ENCODE measurements at regions of chr17 and their contacts with region 1.

Region 1: GRCh38 chr17:45828628-45829027 is 16.1 kb upstream of the SPPL2C start:
- DNase-seq: peak; percentile 74
- H3K4me3 ChIP-seq: no peak overlapping the region; a peak in 1 of 4 replicates
- H3K27ac ChIP-seq: peak overlapping the region in 1 of 2 experiments; percentile 94; a peak in 2 of 4 replicates
- H3K4me1 ChIP-seq: peaks cover 0 to 62% of the 10 kb centered on the region in 2 experiments; a peak in 3 of 4 replicates
- H3K27me3 ChIP-seq: no peaks in the 10 kb centered on the region
- CTCF ChIP-seq: no peak
- EP300 ChIP-seq: no peak
- RAD21 ChIP-seq: peak; percentile 15; the same call in 1 of the 2 replicates

Region 2: GRCh38 chr17:45656527-45657181 is 172.0 kb before region 1 on chr17:
- CTCF ChIA-PET with region 1: interaction called, 38 read pairs
- POLR2A ChIA-PET with region 1: no interaction called
- DNase-seq: no peak
- H3K4me3 ChIP-seq: no peak overlapping the region
- H3K27ac ChIP-seq: no peak overlapping the region
- H3K4me1 ChIP-seq: no peaks in the 10 kb centered on the region
- H3K27me3 ChIP-seq: no peaks in the 10 kb centered on the region; the same call in 1 of the 2 replicates
- CTCF ChIP-seq: no peak
- EP300 ChIP-seq: no peak
- RAD21 ChIP-seq: no peak

Region 3: GRCh38 chr17:45719335-45720071 is 109.1 kb before region 1 on chr17:
- CTCF ChIA-PET with region 1: interaction called, 68 read pairs
- POLR2A ChIA-PET with region 1: interaction called, 3 read pairs
- DNase-seq: no peak
- H3K4me3 ChIP-seq: no peak overlapping the region
- H3K27ac ChIP-seq: no peak overlapping the region
- H3K4me1 ChIP-seq: no peaks in the 10 kb centered on the region
- H3K27me3 ChIP-seq: no peaks in the 10 kb centered on the region; the same call in 1 of the 2 replicates
- CTCF ChIP-seq: peak; percentile 54
- EP300 ChIP-seq: no peak
- RAD21 ChIP-seq: no peak

Region 4: GRCh38 chr17:45756266-45756991 is 72.2 kb before region 1 on chr17:
- CTCF ChIA-PET with region 1: interaction called, 10 read pairs
- POLR2A ChIA-PET with region 1: no interaction called
- DNase-seq: no peak
- H3K4me3 ChIP-seq: no peak overlapping the region
- H3K27ac ChIP-seq: no peak overlapping the region
- H3K4me1 ChIP-seq: peaks cover 0 to 11% of the 10 kb centered on the region in 2 experiments; a peak in 1 of 4 replicates
- H3K27me3 ChIP-seq: no peaks in the 10 kb centered on the region; the same call in 1 of the 2 replicates
- CTCF ChIP-seq: no peak
- EP300 ChIP-seq: no peak
- RAD21 ChIP-seq: no peak

Region 5: DNA sequence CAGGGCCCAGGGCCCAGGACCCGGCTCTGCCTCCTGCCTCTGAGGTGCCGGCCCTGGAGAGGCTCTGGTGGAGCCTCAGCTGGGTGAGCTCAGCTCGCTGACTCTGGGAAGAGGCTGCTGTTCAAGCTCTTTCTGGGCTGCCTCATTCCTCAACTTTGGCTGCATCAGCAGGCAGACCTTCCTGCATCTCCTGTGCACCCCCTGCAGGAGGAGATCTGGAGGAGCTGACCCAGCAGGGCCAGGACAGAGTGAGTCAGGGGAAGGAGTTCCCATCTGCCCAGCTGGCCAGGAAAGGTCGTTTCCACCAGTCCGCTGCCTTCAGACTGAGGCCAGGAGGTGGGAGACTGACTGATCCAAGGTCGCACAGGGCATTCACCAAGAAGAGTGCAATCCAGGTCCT is 33.8 kb before region 1 on chr17:
- CTCF ChIA-PET with region 1: interaction called, 34 read pairs
- POLR2A ChIA-PET with region 1: interaction called, 4 read pairs
- DNase-seq: no peak
- H3K4me3 ChIP-seq: no peak overlapping the region
- H3K27ac ChIP-seq: no peak overlapping the region
- H3K4me1 ChIP-seq: no peaks in the 10 kb centered on the region; a peak in 1 of 4 replicates
- H3K27me3 ChIP-seq: peaks cover 32% of the 10 kb centered on the region; the same call in 1 of the 2 replicates
- CTCF ChIP-seq: peak; percentile 14; the same call in 1 of the 2 replicates
- EP300 ChIP-seq: no peak
- RAD21 ChIP-seq: peak; percentile 34

Region 6: DNA sequence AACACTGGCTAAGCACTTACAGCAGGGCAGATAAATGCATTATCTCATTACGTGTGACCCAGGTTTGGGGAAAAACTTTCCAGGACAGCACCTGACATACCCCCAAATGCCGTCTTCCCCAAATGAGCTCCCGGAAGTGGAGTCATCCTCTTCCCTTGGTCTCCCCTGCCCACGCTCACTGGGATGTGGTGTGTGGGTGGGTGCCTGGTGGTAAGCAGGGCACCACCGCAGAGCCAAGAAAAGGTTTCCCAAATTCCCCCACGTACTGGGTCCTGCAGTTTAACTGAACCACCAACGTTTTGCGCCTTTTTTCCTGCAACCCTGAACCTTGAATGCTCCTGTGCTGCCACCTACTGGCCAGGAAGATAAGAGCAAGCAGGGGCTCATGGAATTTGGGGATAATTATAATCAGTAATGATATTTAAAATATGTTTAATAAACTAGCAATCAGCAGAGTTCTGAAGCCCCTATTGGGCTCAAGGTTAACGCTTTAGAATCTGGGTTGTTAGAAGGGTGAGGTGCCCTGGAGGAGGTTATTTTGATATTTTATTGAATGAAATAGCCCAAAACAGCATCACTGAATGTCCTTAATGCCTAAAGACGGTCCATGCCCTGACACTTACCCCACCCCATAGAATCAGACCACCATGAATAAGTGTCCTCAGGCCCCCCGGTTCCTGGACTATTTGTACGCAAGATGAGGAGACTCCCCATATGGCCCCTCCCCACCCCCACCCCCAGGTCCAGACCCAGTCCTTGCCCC is 24.1 kb after region 1 on chr17:
- CTCF ChIA-PET with region 1: interaction called, 327 read pairs
- POLR2A ChIA-PET with region 1: interaction called, 3 read pairs
- DNase-seq: peak; percentile 84
- H3K4me3 ChIP-seq: no peak overlapping the region; a peak in 1 of 4 replicates
- H3K27ac ChIP-seq: no peak overlapping the region
- H3K4me1 ChIP-seq: peaks cover 0 to 15% of the 10 kb centered on the region in 2 experiments; a peak in 1 of 4 replicates
- H3K27me3 ChIP-seq: peaks cover 6% of the 10 kb centered on the region; the same call in 1 of the 2 replicates
- CTCF ChIP-seq: peak; percentile 100
- EP300 ChIP-seq: no peak
- RAD21 ChIP-seq: peak; percentile 97

Measured in SK-N-SH (cell line).